Tibial artery (tissue), 4 donors: ENCODE measurements at regions of chr17 and their contacts with region 1.

Region 1: GRCh38 chr17:42112552-42113176 is at the start of gene DHX58:
- DNase-seq: peak; percentile 77 to 86
- H3K4me3 ChIP-seq: peak within 1 kb of the TSS; percentile 56 to 63
- H3K27ac ChIP-seq: peak within 1 kb of the TSS; percentile 84 to 91
- H3K4me1 ChIP-seq: peaks cover 0 to 25% (median 12%) of the 10 kb centered on the region in 4 donors
- H3K27me3 ChIP-seq: no peaks in the 10 kb centered on the region
- CTCF ChIP-seq: no peak

Region 2: GRCh38 chr17:41966463-41967140 is 146.1 kb before region 1 on chr17 and contains the start of gene CNP:
- intact Hi-C with region 1: loop called (anchors 10 kb)
- DNase-seq: peak; percentile 92 to 97
- H3K4me3 ChIP-seq: peak within 1 kb of the TSS; percentile 70 to 90
- H3K27ac ChIP-seq: peak within 1 kb of the TSS; percentile 87 to 93
- H3K4me1 ChIP-seq: peaks cover 0 to 49% (median 28%) of the 10 kb centered on the region in 4 donors
- H3K27me3 ChIP-seq: no peaks in the 10 kb centered on the region
- CTCF ChIP-seq: no peak

Region 3: GRCh38 chr17:42019509-42020404 is 92.9 kb before region 1 on chr17 and contains the start of gene NKIRAS2:
- intact Hi-C with region 1: loop called (anchors 2 kb)
- DNase-seq: peak; percentile 94 to 97
- H3K4me3 ChIP-seq: peak within 1 kb of the TSS; percentile 73 to 78
- H3K27ac ChIP-seq: peak within 1 kb of the TSS; percentile 80 to 86
- H3K4me1 ChIP-seq: peaks cover 0 to 42% (median 37%) of the 10 kb centered on the region in 4 donors
- H3K27me3 ChIP-seq: no peaks in the 10 kb centered on the region
- CTCF ChIP-seq: peak; percentile 93 to 95

Region 4: GRCh38 chr17:42067351-42068091 is 45.1 kb before region 1 on chr17:
- intact Hi-C with region 1: loop called (anchors 5 kb)
- DNase-seq: peak; percentile 64 to 73
- H3K4me3 ChIP-seq: no peak overlapping the region
- H3K27ac ChIP-seq: no peak overlapping the region
- H3K4me1 ChIP-seq: peaks cover 0 to 9% (median 8%) of the 10 kb centered on the region in 4 donors
- H3K27me3 ChIP-seq: peaks cover 4 to 59% of the 10 kb centered on the region in 2 donors
- CTCF ChIP-seq: peak; percentile 80 to 89

Region 5: GRCh38 chr17:42266510-42266909 is 153.8 kb after region 1 on chr17:
- intact Hi-C with region 1: no loop called
- DNase-seq: no peak
- H3K4me3 ChIP-seq: no peak overlapping the region
- H3K27ac ChIP-seq: no peak overlapping the region
- H3K4me1 ChIP-seq: peaks cover 0 to 11% (median 0%) of the 10 kb centered on the region in 4 donors
- H3K27me3 ChIP-seq: no peaks in the 10 kb centered on the region
- CTCF ChIP-seq: no peak